Naive thymus-derived CD4-positive, alpha-beta T cell (primary cell): ENCODE measurements at regions of chr19 and their contacts with region 1.

Region 1: DNA sequence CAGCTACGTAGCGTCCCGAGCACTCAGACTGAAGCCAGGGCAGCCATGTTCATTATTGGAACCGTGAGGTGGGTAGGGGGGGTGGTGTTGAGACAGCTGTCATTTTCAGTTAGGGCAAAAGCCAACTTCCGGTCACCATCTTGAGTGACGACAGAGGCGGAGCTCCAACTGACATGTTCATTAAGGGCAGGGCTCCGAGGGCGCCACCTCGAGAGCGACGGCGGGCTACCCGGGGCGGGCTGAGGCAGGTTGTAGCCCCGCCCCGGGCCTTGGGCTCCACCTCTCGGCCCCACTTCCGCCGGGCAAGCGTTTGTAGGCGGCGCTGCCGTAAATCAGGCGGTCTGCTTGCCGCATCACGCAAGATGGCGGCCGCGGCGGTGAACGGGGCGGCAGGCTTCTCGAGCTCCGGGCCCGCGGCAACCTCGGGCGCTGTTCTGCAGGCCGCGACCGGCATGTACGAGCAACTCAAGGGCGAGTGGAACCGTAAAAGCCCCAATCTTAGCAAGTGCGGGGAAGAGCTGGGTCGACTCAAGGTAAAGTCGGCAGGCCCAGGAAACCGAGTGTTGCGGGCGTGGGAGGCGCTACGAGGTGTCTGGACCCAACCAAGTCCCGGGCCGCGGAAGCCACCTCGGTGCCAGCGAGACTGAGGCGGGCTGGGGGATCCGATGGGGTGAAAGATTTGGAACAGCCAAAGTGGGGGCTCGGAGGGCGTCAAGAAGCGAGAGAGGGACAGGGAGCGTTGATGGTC is at the start of gene PSMD8:
- DNase-seq: peak; percentile 95 to 99 (median 99)
- ATAC-seq: peak; percentile 99
- H3K4me3 ChIP-seq: peak within 1 kb of the TSS; percentile 96
- H3K4me3 Mint-ChIP-seq: peak within 1 kb of the TSS; percentile 96 to 100 (median 98)
- H3K27ac ChIP-seq: peak within 1 kb of the TSS; percentile 93
- H3K27ac Mint-ChIP-seq: peak within 1 kb of the TSS; percentile 90 to 99 (median 98)
- H3K4me1 ChIP-seq: peaks cover 17 to 19% of the 10 kb centered on the region in 2 donors
- H3K4me1 Mint-ChIP-seq: peaks cover 17 to 32% (median 29%) of the 10 kb centered on the region in 7 donors
- H3K27me3 ChIP-seq: peaks cover 0 to 4% of the 10 kb centered on the region in 2 donors
- H3K27me3 Mint-ChIP-seq: peaks cover 0 to 8% (median 2%) of the 10 kb centered on the region in 5 donors
- total RNA-seq, gene PSMD8: 68.4 to 181 (median 75.8) TPM

Region 2: GRCh38 chr19:38263689-38264485 is 110.7 kb before region 1 on chr19:
- CTCF ChIA-PET with region 1: interaction called, 3 read pairs
- POLR2A ChIA-PET with region 1: interaction called, 5 read pairs
- intact Hi-C with region 1: loop called in 1 of 2 experiments (anchors 1 kb)
- DNase-seq: peak; percentile 71 to 89 (median 80)
- ATAC-seq: peak; percentile 93
- H3K4me3 ChIP-seq: peak overlapping the region; percentile 77
- H3K4me3 Mint-ChIP-seq: peak overlapping the region; percentile 81 to 93 (median 88)
- H3K27ac ChIP-seq: peak overlapping the region; percentile 77
- H3K27ac Mint-ChIP-seq: peak overlapping the region in 8 of 9 donors; percentile 52 to 93 (median 70)
- H3K4me1 ChIP-seq: peaks cover 4 to 10% of the 10 kb centered on the region in 2 donors
- H3K4me1 Mint-ChIP-seq: peaks cover 17 to 44% (median 39%) of the 10 kb centered on the region in 7 donors
- H3K27me3 ChIP-seq: no peaks in the 10 kb centered on the region
- H3K27me3 Mint-ChIP-seq: peaks cover 0 to 5% (median 2%) of the 10 kb centered on the region in 5 donors

Region 3: GRCh38 chr19:38361633-38362075 is 12.9 kb before region 1 on chr19:
- CTCF ChIA-PET with region 1: interaction called, 3 read pairs
- POLR2A ChIA-PET with region 1: no interaction called
- intact Hi-C with region 1: loop called (anchors 1 kb)
- DNase-seq: peak in 8 of 9 donors; percentile 17 to 80 (median 34)
- ATAC-seq: peak; percentile 83
- H3K4me3 ChIP-seq: peak overlapping the region; percentile 55
- H3K4me3 Mint-ChIP-seq: peak overlapping the region; percentile 62 to 94 (median 83)
- H3K27ac ChIP-seq: no peak overlapping the region
- H3K27ac Mint-ChIP-seq: no peak overlapping the region
- H3K4me1 ChIP-seq: peaks cover 0 to 6% of the 10 kb centered on the region in 2 donors
- H3K4me1 Mint-ChIP-seq: peaks cover 0 to 21% (median 15%) of the 10 kb centered on the region in 7 donors
- H3K27me3 ChIP-seq: no peaks in the 10 kb centered on the region
- H3K27me3 Mint-ChIP-seq: peaks cover 0 to 38% (median 6%) of the 10 kb centered on the region in 5 donors

Region 4: DNA sequence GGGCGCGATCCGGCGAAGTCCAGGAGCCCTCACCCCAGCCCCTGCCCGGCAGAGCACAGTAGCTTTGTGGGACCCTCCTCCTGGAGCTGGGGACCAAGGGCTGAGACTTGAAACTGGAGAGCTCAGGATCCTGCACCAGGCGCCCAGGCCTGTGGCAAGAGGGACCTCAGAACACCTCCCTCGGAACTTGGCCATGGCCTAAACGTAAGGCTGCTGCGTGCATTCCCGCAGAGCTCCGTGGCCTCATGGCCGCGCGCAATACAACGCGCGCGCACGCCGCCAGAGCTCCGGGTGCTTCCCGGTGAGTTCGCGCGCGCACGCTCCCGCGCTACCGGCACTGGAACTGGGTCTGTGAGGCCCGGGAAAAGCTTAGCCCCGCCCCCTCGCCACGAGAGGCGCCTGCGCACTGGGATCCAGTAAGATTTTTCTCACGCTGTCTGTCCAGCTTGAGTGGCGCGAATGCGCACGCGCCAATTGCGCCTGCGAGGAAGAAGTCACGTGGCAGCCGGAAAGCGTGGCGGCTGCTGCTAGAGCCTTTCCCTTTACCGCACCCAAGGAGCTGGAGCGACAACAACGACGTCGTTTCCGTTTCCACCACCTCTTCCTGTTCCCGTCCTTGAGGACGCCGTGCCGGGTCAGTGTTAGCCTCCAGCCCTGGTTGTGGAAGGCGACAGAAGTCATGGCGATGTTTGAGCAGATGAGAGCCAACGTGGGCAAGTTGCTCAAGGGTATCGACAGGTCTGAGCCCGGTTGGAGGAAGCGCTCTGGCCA is 244.2 kb after region 1 on chr19 and contains the start of gene EIF3K:
- CTCF ChIA-PET with region 1: interaction called, 3 read pairs
- POLR2A ChIA-PET with region 1: interaction called, 10 read pairs
- intact Hi-C with region 1: loop called (anchors 1 kb)
- DNase-seq: peak; percentile 94 to 99 (median 96)
- ATAC-seq: peak; percentile 86
- H3K4me3 ChIP-seq: peak within 1 kb of the TSS; percentile 96
- H3K4me3 Mint-ChIP-seq: peak within 1 kb of the TSS; percentile 95 to 100 (median 98)
- H3K27ac ChIP-seq: peak within 1 kb of the TSS; percentile 99
- H3K27ac Mint-ChIP-seq: peak within 1 kb of the TSS; percentile 89 to 100 (median 97)
- H3K4me1 ChIP-seq: peaks cover 33 to 40% of the 10 kb centered on the region in 2 donors
- H3K4me1 Mint-ChIP-seq: peaks cover 38 to 61% (median 44%) of the 10 kb centered on the region in 7 donors
- H3K27me3 ChIP-seq: no peaks in the 10 kb centered on the region
- H3K27me3 Mint-ChIP-seq: no peaks in the 10 kb centered on the region
- total RNA-seq, gene EIF3K: 294 to 405 (median 337) TPM

Region 5: DNA sequence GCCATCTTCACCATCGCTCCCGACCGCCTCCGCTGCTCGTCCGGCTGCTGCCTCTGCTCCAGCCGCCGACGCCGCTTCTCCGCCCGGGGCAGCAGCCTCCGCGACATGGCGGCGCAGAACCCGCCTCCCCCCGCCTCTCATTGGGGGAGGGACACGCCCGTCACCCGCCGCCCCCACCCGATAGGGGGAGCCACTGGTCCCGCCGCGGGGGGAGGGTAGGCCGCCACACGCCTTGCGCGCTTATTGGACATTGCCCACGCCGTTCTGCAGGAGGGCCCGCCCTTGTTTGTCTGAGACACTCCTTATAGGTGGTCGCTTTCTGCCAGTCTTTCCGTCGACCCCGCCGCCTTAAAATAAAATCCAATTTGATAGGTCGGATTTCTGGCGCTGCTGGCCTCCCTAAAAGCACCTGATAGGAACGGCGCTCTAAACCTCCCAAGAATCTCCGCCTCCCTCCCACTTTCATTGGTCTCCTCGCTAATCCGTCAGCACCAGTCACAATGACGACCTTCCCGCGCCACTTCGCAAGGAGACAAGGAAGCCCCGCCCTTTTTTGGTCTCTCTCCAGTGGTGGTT is 475.3 kb after region 1 on chr19 and contains the start of gene HNRNPL:
- CTCF ChIA-PET with region 1: no interaction called
- POLR2A ChIA-PET with region 1: no interaction called
- intact Hi-C with region 1: loop called (anchors 1 kb)
- DNase-seq: peak; percentile 99 to 100 (median 100)
- ATAC-seq: peak; percentile 78
- H3K4me3 ChIP-seq: peak within 1 kb of the TSS; percentile 81
- H3K4me3 Mint-ChIP-seq: peak within 1 kb of the TSS; percentile 88 to 99 (median 96)
- H3K27ac ChIP-seq: peak within 1 kb of the TSS; percentile 96
- H3K27ac Mint-ChIP-seq: peak within 1 kb of the TSS; percentile 94 to 100 (median 99)
- H3K4me1 ChIP-seq: peaks cover 24 to 41% of the 10 kb centered on the region in 2 donors
- H3K4me1 Mint-ChIP-seq: peaks cover 30 to 67% (median 50%) of the 10 kb centered on the region in 7 donors
- H3K27me3 ChIP-seq: no peaks in the 10 kb centered on the region
- H3K27me3 Mint-ChIP-seq: peaks cover 0 to 5% (median 0%) of the 10 kb centered on the region in 5 donors
- total RNA-seq, gene HNRNPL: 339 to 539 (median 505) TPM

Region 6: GRCh38 chr19:39435499-39436349 is 1061.1 kb after region 1 on chr19 and contains the start of gene RPS16:
- CTCF ChIA-PET with region 1: no interaction called
- POLR2A ChIA-PET with region 1: interaction called, 6 read pairs
- intact Hi-C with region 1: loop called in 1 of 2 experiments (anchors 1 kb)
- DNase-seq: peak; percentile 93 to 100 (median 98)
- ATAC-seq: peak; percentile 98
- H3K4me3 ChIP-seq: peak within 1 kb of the TSS; percentile 98
- H3K4me3 Mint-ChIP-seq: peak within 1 kb of the TSS; percentile 92 to 100 (median 98)
- H3K27ac ChIP-seq: peak within 1 kb of the TSS; percentile 97
- H3K27ac Mint-ChIP-seq: peak within 1 kb of the TSS; percentile 95 to 100 (median 99)
- H3K4me1 ChIP-seq: peaks cover 27% of the 10 kb centered on the region in 2 donors
- H3K4me1 Mint-ChIP-seq: peaks cover 20 to 53% (median 40%) of the 10 kb centered on the region in 7 donors
- H3K27me3 ChIP-seq: no peaks in the 10 kb centered on the region
- H3K27me3 Mint-ChIP-seq: peaks cover 0 to 5% (median 0%) of the 10 kb centered on the region in 5 donors
- total RNA-seq, gene RPS16: 2,281 to 4,335 (median 4,063) TPM